Left lung (tissue), 14 donors: ENCODE measurements at regions of chr11 and their contacts with region 1.

Region 1: GRCh38 chr11:111841370-111842053 is 29.9 kb downstream of the ALG9 start:
- DNase-seq: peak in 3 of 4 donors; percentile 79 to 87 (median 87)
- ATAC-seq: peak; percentile 96
- H3K4me3 ChIP-seq: no peak overlapping the region
- H3K27ac ChIP-seq: peak overlapping the region; percentile 21 to 53
- H3K4me1 ChIP-seq: peaks cover 0 to 47% of the 10 kb centered on the region in 2 donors
- H3K27me3 ChIP-seq: no peaks in the 10 kb centered on the region
- CTCF ChIP-seq: peak; percentile 84 to 89

Region 2: DNA sequence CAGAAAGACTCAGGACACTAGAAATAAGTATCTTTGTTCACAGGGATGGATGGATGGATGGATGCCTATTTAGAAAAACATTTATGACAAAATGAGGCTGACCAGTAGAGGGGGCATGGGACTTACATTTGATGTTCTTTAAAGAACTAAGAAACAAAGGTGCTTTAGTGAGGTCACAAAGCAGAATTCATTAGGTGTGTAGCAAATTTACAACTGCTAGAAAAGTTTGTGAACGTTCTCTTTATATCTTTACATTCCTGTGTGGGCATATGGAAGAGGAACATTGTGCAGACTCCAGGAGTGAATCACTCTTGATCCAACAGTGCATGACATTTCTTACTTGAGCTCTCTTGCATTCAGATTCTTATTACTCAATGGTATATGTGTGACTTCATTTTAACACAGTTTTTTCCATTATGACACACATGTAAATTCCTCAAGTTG is 255.1 kb before region 1 on chr11:
- intact Hi-C with region 1: loop called in 1 of 2 experiments (anchors 10 kb)
- DNase-seq: peak in 1 of 4 donors; percentile 55
- ATAC-seq: peak; percentile 77
- H3K4me3 ChIP-seq: no peak overlapping the region
- H3K27ac ChIP-seq: no peak overlapping the region
- H3K4me1 ChIP-seq: no peaks in the 10 kb centered on the region
- H3K27me3 ChIP-seq: no peaks in the 10 kb centered on the region
- CTCF ChIP-seq: peak; percentile 26 to 46

Region 3: DNA sequence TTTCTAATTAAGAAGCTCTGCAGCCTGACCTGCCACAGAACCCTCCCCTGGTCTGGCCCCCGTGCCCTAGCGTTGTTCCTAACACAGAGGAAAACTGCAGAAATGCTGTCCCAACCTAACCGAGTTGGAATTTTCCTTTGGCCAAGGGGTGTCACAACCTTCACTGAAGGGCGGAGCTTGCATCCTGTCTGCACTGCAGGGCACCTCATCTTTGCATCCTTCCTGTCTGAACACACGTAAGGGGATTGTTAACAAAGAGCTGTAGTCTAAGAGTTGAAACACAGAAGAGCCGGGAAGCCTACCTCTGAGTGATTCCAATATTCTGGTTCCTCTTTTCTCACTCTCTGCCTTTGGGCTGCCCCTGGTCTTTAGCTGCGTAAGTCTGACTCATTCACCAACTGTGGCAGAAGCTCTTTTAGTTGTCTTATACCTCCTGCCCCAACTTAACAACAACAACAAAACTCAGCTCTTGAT is 97.2 kb after region 1 on chr11:
- intact Hi-C with region 1: no loop called
- DNase-seq: no peak
- ATAC-seq: peak; percentile 34
- H3K4me3 ChIP-seq: peak overlapping the region in 1 of 2 donors; percentile 62
- H3K27ac ChIP-seq: no peak overlapping the region
- H3K4me1 ChIP-seq: peaks cover 13 to 40% of the 10 kb centered on the region in 2 donors
- H3K27me3 ChIP-seq: no peaks in the 10 kb centered on the region
- CTCF ChIP-seq: no peak

Region 4: DNA sequence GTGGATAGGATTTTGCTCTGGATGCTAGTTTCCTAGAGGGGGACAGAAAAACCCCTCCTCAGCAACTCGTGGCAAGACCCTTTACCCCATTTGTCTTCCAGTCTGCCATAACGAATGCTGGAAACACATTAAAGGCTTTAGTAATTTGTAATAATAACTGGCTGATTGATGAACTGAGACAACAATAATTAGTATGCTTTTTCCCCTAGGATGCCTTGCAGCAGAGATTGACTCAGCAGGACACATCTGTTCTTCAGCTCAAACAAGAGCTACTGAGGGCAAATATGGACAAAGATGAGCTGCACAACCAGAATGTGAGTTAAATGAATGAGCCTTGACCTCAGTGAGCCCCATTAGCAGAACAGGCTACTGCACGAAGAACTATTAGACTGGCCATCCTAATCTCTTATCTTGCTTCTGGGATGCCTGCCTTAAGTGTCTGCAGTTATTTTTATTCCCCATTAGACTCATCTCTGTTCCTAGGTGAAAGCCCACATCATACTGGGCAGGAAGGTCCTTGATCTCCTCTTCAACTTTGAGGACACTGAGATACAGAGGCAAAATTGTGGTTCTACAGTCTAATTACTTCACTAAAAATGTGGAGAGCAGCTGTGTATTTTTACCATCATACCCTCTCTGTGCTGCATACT is 150.8 kb after region 1 on chr11:
- intact Hi-C with region 1: no loop called
- DNase-seq: no peak
- ATAC-seq: no peak
- H3K4me3 ChIP-seq: no peak overlapping the region
- H3K27ac ChIP-seq: no peak overlapping the region
- H3K4me1 ChIP-seq: peaks cover 0 to 3% of the 10 kb centered on the region in 2 donors
- H3K27me3 ChIP-seq: no peaks in the 10 kb centered on the region
- CTCF ChIP-seq: no peak